Endothelial cell of umbilical vein (primary cell): ENCODE measurements at regions of chr6 and their contacts with region 1.

Region 1: GRCh38 chr6:113122060-113122459 is 735.1 kb upstream of the MARCKS start:
- DNase-seq: peak; percentile 97
- H3K4me3 ChIP-seq: no peak overlapping the region
- H3K27ac ChIP-seq: peak overlapping the region; percentile 89
- H3K4me1 ChIP-seq: peaks cover 40% of the 10 kb centered on the region
- H3K27me3 ChIP-seq: no peaks in the 10 kb centered on the region
- CTCF ChIP-seq: peak; percentile 44
- POLR2A ChIP-seq: peak; percentile 17

Region 2: DNA sequence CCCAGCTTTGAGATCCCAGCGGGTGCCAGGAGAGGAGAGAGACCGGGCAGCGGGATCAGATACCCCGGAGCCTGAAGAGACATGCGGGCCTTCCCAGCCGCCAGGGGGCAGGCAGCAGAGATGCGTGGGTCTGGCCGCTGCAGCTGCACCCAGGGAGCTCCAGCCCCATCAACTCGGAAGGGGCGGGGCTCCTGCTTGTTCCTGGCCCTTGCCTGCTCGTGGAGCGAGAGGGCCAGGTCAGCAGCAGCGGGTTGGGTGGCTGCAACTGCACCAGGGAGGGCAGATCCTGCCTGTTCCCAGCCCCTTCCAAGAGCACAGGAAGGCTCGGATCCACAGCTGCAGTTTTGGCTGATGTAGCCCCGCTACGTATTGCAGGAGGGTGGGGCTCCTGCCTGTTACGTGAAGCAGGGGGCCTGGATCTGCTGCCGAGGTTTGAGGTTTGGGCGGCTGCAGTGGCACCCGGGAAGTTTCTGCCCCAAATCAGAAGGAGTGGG is 242.1 kb before region 1 on chr6:
- CTCF ChIA-PET with region 1: interaction called, 17 read pairs
- POLR2A ChIA-PET with region 1: no interaction called
- dilution Hi-C with region 1: no loop called
- intact Hi-C with region 1: loop called (anchors 1 kb)
- DNase-seq: no peak
- H3K4me3 ChIP-seq: no peak overlapping the region
- H3K27ac ChIP-seq: no peak overlapping the region
- H3K4me1 ChIP-seq: peaks cover 23% of the 10 kb centered on the region
- H3K27me3 ChIP-seq: no peaks in the 10 kb centered on the region
- CTCF ChIP-seq: no peak
- POLR2A ChIP-seq: no peak

Region 3: DNA sequence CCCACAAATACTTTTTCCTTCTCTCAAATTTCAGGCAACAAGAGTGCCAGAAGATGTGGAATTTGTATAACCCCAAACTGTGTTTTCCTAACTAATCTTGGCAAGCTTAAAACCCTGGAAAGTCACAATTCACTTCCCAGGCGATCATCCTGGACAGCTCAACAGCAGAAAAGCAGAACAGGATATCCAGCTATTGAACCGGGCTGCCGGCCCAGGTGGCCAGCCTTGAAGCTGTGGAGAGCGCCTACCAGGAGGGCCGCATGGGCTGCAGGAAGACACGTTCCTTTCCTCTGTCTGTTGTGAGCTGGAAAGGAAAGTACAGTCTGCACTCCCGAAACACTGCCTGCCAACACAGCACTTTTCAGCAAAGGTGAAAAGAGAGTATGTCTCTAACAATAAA is 15.4 kb after region 1 on chr6:
- CTCF ChIA-PET with region 1: interaction called, 6 read pairs
- POLR2A ChIA-PET with region 1: no interaction called
- dilution Hi-C with region 1: no loop called
- intact Hi-C with region 1: loop called (anchors 1 kb)
- DNase-seq: peak; percentile 96
- H3K4me3 ChIP-seq: peak overlapping the region in 1 of 3 experiments; percentile 3
- H3K27ac ChIP-seq: peak overlapping the region; percentile 69
- H3K4me1 ChIP-seq: peaks cover 29% of the 10 kb centered on the region
- H3K27me3 ChIP-seq: no peaks in the 10 kb centered on the region
- CTCF ChIP-seq: no peak
- POLR2A ChIP-seq: no peak

Region 4: GRCh38 chr6:113306552-113307145 is 184.6 kb after region 1 on chr6:
- CTCF ChIA-PET with region 1: interaction called, 8 read pairs
- POLR2A ChIA-PET with region 1: no interaction called
- dilution Hi-C with region 1: no loop called
- intact Hi-C with region 1: loop called (anchors 5 kb)
- DNase-seq: peak; percentile 36
- H3K4me3 ChIP-seq: no peak overlapping the region
- H3K27ac ChIP-seq: no peak overlapping the region
- H3K4me1 ChIP-seq: no peaks in the 10 kb centered on the region
- H3K27me3 ChIP-seq: no peaks in the 10 kb centered on the region
- CTCF ChIP-seq: peak; percentile 39 to 49
- POLR2A ChIP-seq: no peak

Region 5: DNA sequence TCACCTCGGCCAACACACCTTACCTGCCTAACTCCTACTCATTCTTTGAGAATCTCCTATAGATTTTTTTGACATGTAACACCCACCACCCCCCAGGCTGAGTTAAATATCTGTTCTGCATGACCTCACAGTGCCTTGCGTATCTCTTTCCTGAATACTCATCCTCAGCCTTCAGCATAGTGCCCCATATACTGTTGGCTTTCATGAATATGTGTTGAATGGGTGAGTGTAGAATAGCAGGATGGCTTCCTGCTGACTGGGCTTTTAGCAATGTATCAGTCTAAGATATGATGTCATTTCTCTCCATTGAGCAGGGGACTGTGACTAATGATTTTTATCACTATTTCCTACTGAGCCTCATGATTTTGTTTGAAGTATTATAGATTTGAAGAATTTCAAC is 373.4 kb after region 1 on chr6:
- CTCF ChIA-PET with region 1: interaction called, 3 read pairs
- POLR2A ChIA-PET with region 1: no interaction called
- dilution Hi-C with region 1: no loop called
- intact Hi-C with region 1: loop called (anchors 1 kb)
- DNase-seq: peak; percentile 91
- H3K4me3 ChIP-seq: no peak overlapping the region
- H3K27ac ChIP-seq: peak overlapping the region; percentile 100
- H3K4me1 ChIP-seq: peaks cover 33% of the 10 kb centered on the region
- H3K27me3 ChIP-seq: no peaks in the 10 kb centered on the region
- CTCF ChIP-seq: no peak
- POLR2A ChIP-seq: no peak

Region 6: GRCh38 chr6:113909234-113909856 is 787.3 kb after region 1 on chr6:
- CTCF ChIA-PET with region 1: no interaction called
- POLR2A ChIA-PET with region 1: no interaction called
- dilution Hi-C with region 1: no loop called
- intact Hi-C with region 1: loop called (anchors 1 kb)
- DNase-seq: peak; percentile 81
- H3K4me3 ChIP-seq: no peak overlapping the region
- H3K27ac ChIP-seq: no peak overlapping the region
- H3K4me1 ChIP-seq: peaks cover 2% of the 10 kb centered on the region
- H3K27me3 ChIP-seq: no peaks in the 10 kb centered on the region
- CTCF ChIP-seq: peak; percentile 30 to 37
- POLR2A ChIP-seq: no peak